ENCODE measurements at regions of chr1 and their contacts with region 1.

Region 1: DNA sequence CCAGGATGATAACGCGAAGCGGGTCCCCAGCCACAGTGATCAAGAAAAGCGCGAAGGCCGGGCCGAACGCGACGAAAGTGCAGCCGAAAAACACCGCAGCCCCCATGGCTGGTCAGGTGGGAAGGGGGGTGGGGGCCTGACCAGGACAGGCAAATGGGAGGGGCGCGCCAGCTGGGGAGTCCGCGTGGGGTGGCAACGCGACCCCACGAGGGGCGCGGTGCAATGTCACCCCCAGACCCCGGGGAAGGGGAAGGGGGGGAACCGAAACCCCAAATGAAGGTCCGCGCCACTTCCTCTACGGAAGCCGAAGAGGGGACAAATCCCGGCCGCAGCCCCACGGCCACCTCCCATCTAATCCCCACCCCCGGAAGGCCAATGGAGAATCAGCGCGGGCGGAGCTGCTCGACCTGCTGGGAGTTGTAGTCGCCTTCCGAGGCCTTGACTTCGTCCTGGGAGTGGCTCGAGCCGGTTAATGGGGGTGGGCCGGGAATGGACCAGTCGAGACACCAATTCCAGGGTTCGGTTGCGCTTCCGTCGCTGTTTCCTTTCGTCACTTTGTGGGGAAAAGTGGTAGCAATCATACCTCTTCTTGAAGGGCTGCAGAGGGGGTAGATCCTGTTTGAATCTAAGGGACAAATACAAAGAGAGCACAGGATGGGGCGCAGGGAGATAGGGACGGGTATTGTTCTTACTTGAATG is at the start of gene APH1A:
- DNase-seq: peak; percentile 80 to 96 (median 90)
- ATAC-seq: peak; percentile 89
- H3K4me3 ChIP-seq: peak within 1 kb of the TSS; percentile 95
- H3K4me3 Mint-ChIP-seq: peak within 1 kb of the TSS; percentile 99
- H3K27ac ChIP-seq: peak within 1 kb of the TSS; percentile 91 to 96
- H3K27ac Mint-ChIP-seq: peak within 1 kb of the TSS; percentile 91
- H3K4me1 ChIP-seq: peaks cover 29% of the 10 kb centered on the region
- H3K4me1 Mint-ChIP-seq: peaks cover 38% of the 10 kb centered on the region
- H3K27me3 ChIP-seq: no peaks in the 10 kb centered on the region
- H3K27me3 Mint-ChIP-seq: no peaks in the 10 kb centered on the region
- CTCF ChIP-seq: no peak
- total RNA-seq, gene APH1A: 115 to 122 TPM

Region 2: GRCh38 chr1:150235852-150236613 is 32.8 kb before region 1 on chr1 and contains the start of gene ANP32E:
- CTCF ChIA-PET with region 1: no interaction called
- POLR2A ChIA-PET with region 1: interaction called, 13 read pairs
- intact Hi-C with region 1: loop called in 1 of 2 experiments (anchors 1 kb)
- DNase-seq: peak; percentile 89 to 99 (median 91)
- ATAC-seq: peak; percentile 89
- H3K4me3 ChIP-seq: peak within 1 kb of the TSS; percentile 85
- H3K4me3 Mint-ChIP-seq: no peak within 1 kb of the TSS
- H3K27ac ChIP-seq: peak within 1 kb of the TSS; percentile 96 to 99
- H3K27ac Mint-ChIP-seq: no peak within 1 kb of the TSS
- H3K4me1 ChIP-seq: peaks cover 25% of the 10 kb centered on the region
- H3K4me1 Mint-ChIP-seq: peaks cover 16% of the 10 kb centered on the region
- H3K27me3 ChIP-seq: no peaks in the 10 kb centered on the region
- H3K27me3 Mint-ChIP-seq: no peaks in the 10 kb centered on the region
- CTCF ChIP-seq: no peak
- total RNA-seq, gene ANP32E: 31.9 to 32.9 TPM

Region 3: DNA sequence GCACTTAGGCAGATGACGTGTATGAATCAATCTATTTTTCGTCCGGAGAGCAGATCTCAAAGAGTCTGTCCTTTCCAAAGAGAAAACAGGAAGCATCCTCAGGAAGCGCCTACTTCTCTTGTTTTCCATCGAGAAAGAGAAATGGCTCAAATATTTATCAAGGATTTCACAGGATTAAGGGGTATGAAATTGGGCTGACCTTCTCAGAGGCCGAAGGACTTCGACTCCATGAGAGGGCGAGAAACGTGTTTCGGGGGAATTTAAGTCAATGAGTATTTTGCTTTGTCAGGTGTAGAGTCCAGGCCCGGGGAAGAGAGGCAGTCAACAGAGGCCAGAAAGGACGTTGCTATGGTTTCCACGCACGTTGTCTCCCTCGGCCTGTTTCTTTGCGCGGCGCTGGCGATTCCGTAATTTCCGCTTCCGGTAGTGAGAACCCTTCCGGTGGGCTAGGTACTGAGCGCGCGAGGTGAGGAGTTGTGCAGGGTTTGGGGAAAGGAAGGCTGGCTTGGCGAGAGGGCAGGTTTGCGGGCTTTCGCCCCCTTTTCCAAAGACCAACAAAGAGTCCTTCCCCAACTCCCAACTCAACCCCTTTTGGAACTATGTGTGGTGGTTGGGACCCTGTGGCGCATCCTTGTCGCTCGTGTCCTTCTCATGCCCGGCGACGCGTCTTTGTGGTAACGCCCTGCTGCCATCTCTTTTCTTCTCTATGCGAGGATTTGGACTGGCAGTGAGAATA is 24.7 kb after region 1 on chr1 and contains the start of gene MRPS21:
- CTCF ChIA-PET with region 1: no interaction called
- POLR2A ChIA-PET with region 1: interaction called, 3 read pairs
- intact Hi-C with region 1: loop called in 1 of 2 experiments (anchors 2 kb)
- DNase-seq: peak; percentile 73 to 95 (median 80)
- ATAC-seq: peak; percentile 95
- H3K4me3 ChIP-seq: peak within 1 kb of the TSS; percentile 80
- H3K4me3 Mint-ChIP-seq: peak within 1 kb of the TSS; percentile 92
- H3K27ac ChIP-seq: peak within 1 kb of the TSS; percentile 78 to 95
- H3K27ac Mint-ChIP-seq: peak within 1 kb of the TSS; percentile 96
- H3K4me1 ChIP-seq: peaks cover 19% of the 10 kb centered on the region
- H3K4me1 Mint-ChIP-seq: peaks cover 23% of the 10 kb centered on the region
- H3K27me3 ChIP-seq: no peaks in the 10 kb centered on the region
- H3K27me3 Mint-ChIP-seq: no peaks in the 10 kb centered on the region
- CTCF ChIP-seq: no peak
- total RNA-seq, gene MRPS21: 48.5 to 52.0 TPM

Region 4: DNA sequence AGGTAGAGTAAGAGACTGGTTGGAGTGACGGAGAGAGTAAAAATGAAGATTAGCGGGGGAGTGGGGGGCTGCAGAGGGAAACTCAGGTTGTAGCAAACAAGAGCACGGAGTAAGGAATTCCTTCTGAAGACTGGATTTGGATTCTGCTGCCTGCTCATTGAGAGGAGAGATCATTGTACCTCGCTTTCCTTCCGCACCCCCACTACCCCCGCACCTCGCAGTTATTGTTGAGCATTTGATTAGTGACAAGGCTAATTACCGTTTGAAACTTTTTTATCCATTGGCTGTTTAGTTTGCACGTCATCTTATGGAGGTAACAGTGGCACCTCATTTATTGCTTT is 52.9 kb after region 1 on chr1:
- CTCF ChIA-PET with region 1: no interaction called
- POLR2A ChIA-PET with region 1: interaction called, 3 read pairs
- intact Hi-C with region 1: loop called in 1 of 2 experiments (anchors 2 kb)
- DNase-seq: peak in 5 of 14 experiments; percentile 3 to 38 (median 28)
- ATAC-seq: peak; percentile 20
- H3K4me3 ChIP-seq: peak overlapping the region; percentile 78
- H3K4me3 Mint-ChIP-seq: peak overlapping the region; percentile 97
- H3K27ac ChIP-seq: peak overlapping the region; percentile 83 to 84
- H3K27ac Mint-ChIP-seq: peak overlapping the region; percentile 95
- H3K4me1 ChIP-seq: peaks cover 34% of the 10 kb centered on the region
- H3K4me1 Mint-ChIP-seq: peaks cover 39% of the 10 kb centered on the region
- H3K27me3 ChIP-seq: no peaks in the 10 kb centered on the region
- H3K27me3 Mint-ChIP-seq: no peaks in the 10 kb centered on the region
- CTCF ChIP-seq: no peak